ENCODE measurements at regions of chr5 and their contacts with region 1.

Region 1: DNA sequence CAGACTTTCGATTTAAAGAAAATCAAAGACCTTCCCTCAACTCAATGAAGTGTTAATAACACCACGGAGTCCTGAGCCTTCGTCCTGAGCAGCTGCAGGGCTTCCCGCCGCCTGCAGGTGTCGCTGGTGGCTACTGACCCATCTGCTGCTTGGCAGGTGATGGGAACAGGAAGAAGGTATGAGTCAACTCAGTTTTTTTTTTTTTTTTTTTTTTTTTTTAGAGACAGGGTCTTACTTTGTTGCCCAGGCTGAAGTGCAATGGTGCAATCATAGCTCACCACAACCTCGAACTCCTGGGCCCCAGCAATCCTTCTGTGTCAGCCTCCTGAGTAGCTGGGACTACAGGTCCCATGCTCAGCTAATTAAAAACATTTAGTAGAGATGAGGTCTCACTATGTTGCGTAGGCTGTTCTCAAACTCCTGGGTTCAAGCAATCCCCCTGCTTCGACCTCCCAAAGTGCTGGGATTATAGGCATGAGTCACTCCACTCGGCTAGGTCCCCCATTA is 185.7 kb upstream of the IL12B start:
- DNase-seq: peak; percentile 14 to 65 (median 30)
- ATAC-seq: peak; percentile 84
- H3K4me3 ChIP-seq: no peak overlapping the region
- H3K4me3 Mint-ChIP-seq: peak overlapping the region in 1 of 10 donors; percentile 27
- H3K27ac ChIP-seq: no peak overlapping the region
- H3K27ac Mint-ChIP-seq: no peak overlapping the region
- H3K4me1 ChIP-seq: no peaks in the 10 kb centered on the region
- H3K4me1 Mint-ChIP-seq: peaks cover 0 to 5% (median 3%) of the 10 kb centered on the region in 7 donors
- H3K27me3 ChIP-seq: no peaks in the 10 kb centered on the region
- H3K27me3 Mint-ChIP-seq: peaks cover 3 to 20% (median 6%) of the 10 kb centered on the region in 5 donors

Region 2: DNA sequence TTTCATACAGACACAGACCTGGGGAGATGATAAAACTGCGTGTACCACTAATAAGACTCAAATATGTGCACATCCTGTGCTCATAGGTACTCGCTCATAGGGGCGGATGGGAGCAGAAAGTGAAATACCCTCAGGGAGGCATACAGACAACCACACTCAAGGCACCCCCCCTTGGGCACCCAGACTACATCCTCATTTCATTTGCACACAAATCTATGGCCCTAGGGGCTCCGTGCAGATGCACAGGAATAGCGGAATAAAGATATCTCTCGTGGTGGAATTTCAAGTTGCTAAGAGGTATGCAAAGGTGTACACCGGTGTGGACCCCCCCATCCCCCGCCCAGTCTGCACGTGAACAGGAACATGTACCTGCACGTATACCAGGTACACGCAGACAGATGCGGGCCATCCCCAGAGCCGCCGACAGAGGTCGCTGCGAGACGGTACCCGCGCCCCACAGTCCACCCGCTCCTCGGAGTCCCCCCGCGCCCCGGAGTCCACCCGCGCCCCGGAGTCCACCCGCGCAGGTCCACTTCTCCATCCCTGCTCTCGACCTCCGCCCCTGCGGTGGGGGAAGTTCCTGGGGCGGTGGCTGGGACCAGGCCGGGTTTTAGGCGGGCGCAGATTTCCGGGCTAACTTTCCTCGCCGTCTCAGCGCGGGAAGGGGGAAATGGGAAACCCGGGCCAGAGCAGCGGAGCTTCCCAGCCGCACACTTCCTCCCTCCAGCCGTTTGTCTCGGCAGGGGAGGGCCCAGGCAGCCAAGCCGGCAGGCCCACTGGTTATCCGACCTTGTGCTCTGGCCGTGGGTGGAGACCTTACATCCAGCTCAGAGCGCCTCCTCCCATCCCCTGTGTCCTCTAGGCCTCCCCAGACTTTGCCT is 184.6 kb before region 1 on chr5:
- CTCF ChIA-PET with region 1: no interaction called
- POLR2A ChIA-PET with region 1: no interaction called
- intact Hi-C with region 1: loop called in 1 of 2 experiments (anchors 5 kb)
- DNase-seq: peak; percentile 43 to 79 (median 65)
- ATAC-seq: peak; percentile 93
- H3K4me3 ChIP-seq: peak overlapping the region; percentile 46
- H3K4me3 Mint-ChIP-seq: peak overlapping the region; percentile 66 to 80 (median 74)
- H3K27ac ChIP-seq: peak overlapping the region; percentile 22
- H3K27ac Mint-ChIP-seq: peak overlapping the region in 6 of 9 donors; percentile 9 to 75 (median 64)
- H3K4me1 ChIP-seq: peaks cover 0 to 4% of the 10 kb centered on the region in 2 donors
- H3K4me1 Mint-ChIP-seq: peaks cover 3 to 52% (median 23%) of the 10 kb centered on the region in 7 donors
- H3K27me3 ChIP-seq: no peaks in the 10 kb centered on the region
- H3K27me3 Mint-ChIP-seq: peaks cover 0 to 35% (median 0%) of the 10 kb centered on the region in 5 donors

Region 3: DNA sequence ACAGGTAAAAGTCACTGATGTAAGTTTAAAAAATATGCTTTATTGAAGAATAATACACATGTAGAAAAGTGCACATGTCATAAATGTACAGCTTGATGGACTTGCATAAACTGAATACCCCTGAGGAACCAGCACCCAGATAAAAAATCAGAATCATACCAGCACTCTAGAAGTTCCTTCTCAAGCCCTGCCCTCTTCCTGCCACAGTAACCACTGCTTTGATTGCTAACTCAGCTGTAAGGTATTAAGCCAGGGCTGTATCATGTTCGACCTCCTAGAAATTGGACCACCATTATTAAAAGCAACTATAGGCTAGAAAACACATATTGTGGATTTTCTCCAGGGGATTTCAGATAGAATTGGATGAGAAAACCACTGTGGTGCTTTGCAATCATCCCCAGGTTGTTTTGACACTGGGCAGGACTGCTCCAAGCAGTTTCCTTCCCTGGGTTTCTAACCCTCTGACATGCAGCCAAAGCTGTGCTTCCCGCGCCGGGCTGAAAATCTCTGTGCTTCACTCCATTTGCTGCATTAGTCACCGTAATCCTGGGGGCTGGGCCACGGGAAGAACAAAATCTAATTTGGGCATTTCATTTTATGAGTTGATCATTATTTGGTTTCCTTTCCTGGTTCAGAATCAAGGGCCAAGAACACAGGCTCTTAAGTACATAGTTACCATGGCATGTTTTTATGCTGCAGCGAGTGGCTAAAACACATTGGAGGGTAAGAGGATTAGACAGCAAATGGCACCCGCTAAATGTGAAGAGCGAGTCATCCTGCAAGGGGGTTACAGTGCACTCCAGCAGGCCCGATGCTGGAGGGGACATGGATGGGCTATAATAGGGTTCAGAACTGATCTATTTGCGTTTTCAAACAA is 46.2 kb before region 1 on chr5:
- CTCF ChIA-PET with region 1: no interaction called
- POLR2A ChIA-PET with region 1: no interaction called
- intact Hi-C with region 1: loop called in 1 of 2 experiments (anchors 5 kb)
- DNase-seq: peak in 5 of 9 donors; percentile 4 to 45 (median 25)
- ATAC-seq: peak; percentile 85
- H3K4me3 ChIP-seq: no peak overlapping the region
- H3K4me3 Mint-ChIP-seq: peak overlapping the region in 8 of 10 donors; percentile 24 to 72 (median 48)
- H3K27ac ChIP-seq: no peak overlapping the region
- H3K27ac Mint-ChIP-seq: peak overlapping the region in 2 of 9 donors; percentile 5 to 95
- H3K4me1 ChIP-seq: peaks cover 11 to 16% of the 10 kb centered on the region in 2 donors
- H3K4me1 Mint-ChIP-seq: peaks cover 16 to 29% (median 21%) of the 10 kb centered on the region in 7 donors
- H3K27me3 ChIP-seq: no peaks in the 10 kb centered on the region
- H3K27me3 Mint-ChIP-seq: peaks cover 0 to 58% (median 4%) of the 10 kb centered on the region in 5 donors

Region 4: GRCh38 chr5:159965031-159965837 is 449.3 kb after region 1 on chr5:
- CTCF ChIA-PET with region 1: no interaction called
- POLR2A ChIA-PET with region 1: no interaction called
- intact Hi-C with region 1: loop called in 1 of 2 experiments (anchors 5 kb)
- DNase-seq: peak in 2 of 9 donors; percentile 13 to 32
- ATAC-seq: peak; percentile 55
- H3K4me3 ChIP-seq: no peak overlapping the region
- H3K4me3 Mint-ChIP-seq: no peak overlapping the region
- H3K27ac ChIP-seq: no peak overlapping the region
- H3K27ac Mint-ChIP-seq: peak overlapping the region in 1 of 9 donors; percentile 52
- H3K4me1 ChIP-seq: no peaks in the 10 kb centered on the region
- H3K4me1 Mint-ChIP-seq: peaks cover 0 to 2% (median 0%) of the 10 kb centered on the region in 7 donors
- H3K27me3 ChIP-seq: no peaks in the 10 kb centered on the region
- H3K27me3 Mint-ChIP-seq: peaks cover 33 to 55% (median 37%) of the 10 kb centered on the region in 5 donors

Region 5: DNA sequence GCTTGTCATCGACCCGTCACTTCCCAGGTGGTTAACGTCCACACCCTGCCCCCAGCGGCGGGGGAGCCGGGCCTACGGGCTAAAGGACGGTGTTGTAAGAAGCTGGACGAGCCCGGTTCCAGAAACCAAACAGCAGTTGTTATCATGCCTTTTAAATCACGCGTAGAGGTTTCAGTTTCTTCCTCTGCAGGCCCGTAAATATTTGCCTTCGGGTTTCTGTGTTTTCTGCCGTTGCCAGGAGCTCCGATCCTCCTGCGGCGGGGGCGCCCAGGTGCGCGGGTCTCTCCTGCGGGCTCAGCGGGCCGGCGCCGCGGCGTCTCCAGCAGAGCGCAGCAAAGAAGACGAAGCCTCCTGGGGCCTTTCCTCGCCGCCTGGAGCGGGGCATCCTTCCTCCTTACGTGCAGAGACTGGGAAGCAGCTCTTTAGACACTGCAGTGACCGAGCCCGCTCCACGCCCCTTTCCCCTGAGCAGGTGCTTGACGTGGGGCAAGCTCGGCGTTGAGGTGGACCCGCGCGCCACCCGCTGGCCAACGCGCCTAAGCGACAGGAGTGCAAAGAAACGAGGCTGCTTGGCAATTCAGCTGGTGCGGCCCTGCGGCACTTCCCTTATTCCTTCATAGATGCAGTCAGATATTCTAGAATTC is 471.2 kb after region 1 on chr5:
- CTCF ChIA-PET with region 1: no interaction called
- POLR2A ChIA-PET with region 1: no interaction called
- intact Hi-C with region 1: loop called (anchors 1 to 2 kb)
- DNase-seq: peak; percentile 56 to 73 (median 69)
- ATAC-seq: peak; percentile 92
- H3K4me3 ChIP-seq: peak overlapping the region; percentile 58
- H3K4me3 Mint-ChIP-seq: peak overlapping the region; percentile 55 to 78 (median 66)
- H3K27ac ChIP-seq: no peak overlapping the region
- H3K27ac Mint-ChIP-seq: peak overlapping the region in 3 of 9 donors; percentile 70 to 83 (median 70)
- H3K4me1 ChIP-seq: peaks cover 0 to 6% of the 10 kb centered on the region in 2 donors
- H3K4me1 Mint-ChIP-seq: peaks cover 0 to 3% (median 0%) of the 10 kb centered on the region in 7 donors
- H3K27me3 ChIP-seq: peaks cover 0 to 5% of the 10 kb centered on the region in 2 donors
- H3K27me3 Mint-ChIP-seq: peaks cover 24 to 70% (median 34%) of the 10 kb centered on the region in 5 donors

Measured in naive thymus-derived CD4-positive, alpha-beta T cell (primary cell).